ENCODE measurements at regions of chr20 and their contacts with region 1.

Region 1: GRCh38 chr20:8131598-8132483 is at the start of gene PLCB1:
- DNase-seq: peak; percentile 98
- H3K4me3 ChIP-seq: peak within 1 kb of the TSS; percentile 78 to 92 (median 86)
- H3K27ac ChIP-seq: peak within 1 kb of the TSS; percentile 91 to 96 (median 92)
- H3K4me1 ChIP-seq: peaks cover 11 to 80% (median 74%) of the 10 kb centered on the region in 4 donors
- H3K27me3 ChIP-seq: no peaks in the 10 kb centered on the region
- CTCF ChIP-seq: peak in 2 of 3 experiments; percentile 90 to 92
- EP300 ChIP-seq: no peak
- POLR2A ChIP-seq: no peak
- total RNA-seq, gene PLCB1: 72.9 to 115 (median 76.3) TPM

Region 2: GRCh38 chr20:8043687-8044282 is 88.1 kb before region 1 on chr20:
- intact Hi-C with region 1: loop called (anchors 1 kb)
- DNase-seq: no peak
- H3K4me3 ChIP-seq: peak overlapping the region in 1 of 4 donors; percentile 21
- H3K27ac ChIP-seq: no peak overlapping the region
- H3K4me1 ChIP-seq: peaks cover 0 to 10% (median 0%) of the 10 kb centered on the region in 4 donors
- H3K27me3 ChIP-seq: no peaks in the 10 kb centered on the region
- CTCF ChIP-seq: peak; percentile 71 to 75 (median 73)
- EP300 ChIP-seq: no peak
- POLR2A ChIP-seq: no peak

Region 3: DNA sequence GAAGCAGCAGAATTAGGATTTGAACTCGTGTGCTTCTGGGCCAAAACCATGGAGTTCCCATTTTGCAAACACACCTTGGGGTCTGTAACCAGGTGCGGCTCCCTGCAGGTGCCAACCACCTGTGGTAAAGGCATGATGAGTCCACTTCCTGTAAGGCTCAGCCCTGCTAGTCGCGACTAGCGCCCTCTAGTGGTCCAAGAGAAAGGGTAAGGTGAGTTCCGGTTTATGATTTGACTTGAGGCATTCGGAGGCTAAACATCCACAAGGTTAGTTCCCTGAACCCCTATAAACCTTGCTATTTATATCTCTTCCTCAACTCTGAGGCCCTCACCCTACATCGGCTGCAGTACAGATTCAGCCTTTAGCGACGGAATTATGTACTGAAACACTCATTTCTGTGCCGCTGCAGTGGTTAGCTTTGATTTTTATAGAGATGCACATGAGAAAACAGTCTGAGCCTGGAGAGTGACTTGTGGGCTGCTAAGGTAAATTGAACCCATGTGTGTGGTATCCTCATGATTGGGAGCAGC is 173.7 kb after region 1 on chr20:
- intact Hi-C with region 1: loop called (anchors 5 kb)
- DNase-seq: no peak
- H3K4me3 ChIP-seq: no peak overlapping the region
- H3K27ac ChIP-seq: peak overlapping the region in 2 of 4 donors; percentile 1 to 29
- H3K4me1 ChIP-seq: peaks cover 0 to 87% (median 73%) of the 10 kb centered on the region in 4 donors
- H3K27me3 ChIP-seq: no peaks in the 10 kb centered on the region
- CTCF ChIP-seq: peak; percentile 24 to 63 (median 46)
- EP300 ChIP-seq: no peak
- POLR2A ChIP-seq: no peak

Region 4: GRCh38 chr20:8389381-8390036 is 257.7 kb after region 1 on chr20:
- intact Hi-C with region 1: loop called (anchors 2 kb)
- DNase-seq: no peak
- H3K4me3 ChIP-seq: no peak overlapping the region
- H3K27ac ChIP-seq: peak overlapping the region in 1 of 4 donors; percentile 39
- H3K4me1 ChIP-seq: peaks cover 9 to 43% (median 38%) of the 10 kb centered on the region in 4 donors
- H3K27me3 ChIP-seq: no peaks in the 10 kb centered on the region
- CTCF ChIP-seq: peak; percentile 52 to 54 (median 53)
- EP300 ChIP-seq: no peak
- POLR2A ChIP-seq: no peak

Region 5: DNA sequence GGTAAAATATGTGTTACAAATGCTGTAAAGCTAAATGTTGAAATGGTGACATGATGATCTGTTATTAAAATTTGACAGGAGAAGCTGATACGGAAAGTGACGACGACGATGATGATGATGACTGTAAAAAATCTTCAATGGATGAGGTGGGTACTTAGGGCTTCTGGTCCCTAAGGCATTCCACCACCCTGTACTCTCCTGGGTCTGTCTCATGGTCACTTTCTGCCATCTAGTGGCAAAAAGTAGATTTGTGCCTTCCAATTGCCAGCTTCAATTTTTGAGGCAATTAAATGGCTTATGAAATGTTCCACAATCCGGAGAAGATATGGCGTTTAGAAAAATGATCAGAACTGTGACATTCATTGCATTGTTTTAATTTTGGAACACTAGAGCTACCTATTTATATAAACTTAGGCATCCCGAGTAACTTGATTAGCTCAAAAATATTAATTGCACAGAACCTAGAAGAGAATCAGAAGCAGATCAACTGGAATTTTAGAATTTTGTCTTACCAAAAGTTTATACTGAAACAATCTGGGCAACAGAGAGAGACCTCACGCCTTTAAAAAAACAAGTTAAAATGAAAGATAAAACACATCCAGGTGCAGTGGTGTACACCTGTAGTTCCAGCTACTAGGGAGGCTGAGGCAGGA is 590.6 kb after region 1 on chr20:
- intact Hi-C with region 1: loop called (anchors 2 kb)
- DNase-seq: no peak
- H3K4me3 ChIP-seq: no peak overlapping the region
- H3K27ac ChIP-seq: no peak overlapping the region
- H3K4me1 ChIP-seq: peaks cover 4 to 21% (median 14%) of the 10 kb centered on the region in 4 donors
- H3K27me3 ChIP-seq: no peaks in the 10 kb centered on the region
- CTCF ChIP-seq: peak; percentile 76 to 81 (median 77)
- EP300 ChIP-seq: no peak
- POLR2A ChIP-seq: no peak